Sigmoid colon (tissue), 7 donors: ENCODE measurements at regions of chr14 and their contacts with region 1.

Region 1: DNA sequence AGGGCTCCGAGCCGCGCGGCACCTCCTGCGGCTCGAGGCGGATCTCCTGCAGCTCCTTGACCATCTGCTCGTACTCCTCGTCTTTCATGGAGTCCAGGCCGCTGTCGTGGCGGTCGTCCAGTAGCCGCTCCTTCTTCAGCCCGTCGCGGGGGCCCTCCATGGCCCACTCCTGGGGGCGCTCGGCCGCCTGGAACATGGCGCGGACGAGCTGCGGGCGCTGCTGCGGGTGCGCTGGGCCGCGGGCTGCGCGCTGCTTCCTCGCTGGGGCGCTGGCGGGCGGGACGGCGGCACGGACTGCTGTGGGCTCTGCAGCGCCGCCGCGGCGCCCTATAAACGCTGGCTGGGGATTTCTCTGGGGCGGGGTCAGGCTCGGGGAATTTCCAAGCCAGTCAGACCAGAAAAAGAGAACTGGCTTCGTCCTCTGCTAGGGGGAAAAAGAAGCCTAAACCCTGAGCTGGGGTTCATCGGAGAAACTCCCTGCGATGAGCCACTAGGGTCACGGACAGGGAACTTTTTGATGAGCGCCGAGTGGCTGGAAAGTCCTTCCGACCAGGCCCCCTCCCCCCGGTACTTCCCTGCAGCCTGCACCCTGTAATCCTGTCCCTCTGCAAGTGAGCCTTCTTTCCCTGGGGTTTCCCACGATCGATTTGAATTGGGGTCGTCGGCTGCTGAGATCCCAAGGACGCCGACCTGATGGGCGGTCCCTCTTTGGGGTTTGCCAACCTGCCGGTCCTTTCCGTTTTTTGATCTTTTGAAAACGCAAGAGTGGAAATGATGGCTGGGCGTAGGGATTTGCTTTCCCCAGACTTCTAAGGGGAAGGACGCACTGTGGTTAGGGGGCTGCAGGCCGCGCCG is at the start of gene NFKBIA:
- DNase-seq: peak; percentile 96
- H3K4me3 ChIP-seq: peak within 1 kb of the TSS; percentile 83 to 99 (median 96)
- H3K27ac ChIP-seq: peak within 1 kb of the TSS; percentile 97 to 100 (median 100)
- H3K4me1 ChIP-seq: peaks cover 0 to 56% (median 45%) of the 10 kb centered on the region in 4 donors
- H3K27me3 ChIP-seq: no peaks in the 10 kb centered on the region
- CTCF ChIP-seq: peak in 1 of 4 experiments; percentile 21
- EP300 ChIP-seq: peak in 1 of 4 donors; percentile 15
- POLR2A ChIP-seq: peak; percentile 65 to 70
- total RNA-seq, gene NFKBIA: 258 to 340 (median 289) TPM

Region 2: DNA sequence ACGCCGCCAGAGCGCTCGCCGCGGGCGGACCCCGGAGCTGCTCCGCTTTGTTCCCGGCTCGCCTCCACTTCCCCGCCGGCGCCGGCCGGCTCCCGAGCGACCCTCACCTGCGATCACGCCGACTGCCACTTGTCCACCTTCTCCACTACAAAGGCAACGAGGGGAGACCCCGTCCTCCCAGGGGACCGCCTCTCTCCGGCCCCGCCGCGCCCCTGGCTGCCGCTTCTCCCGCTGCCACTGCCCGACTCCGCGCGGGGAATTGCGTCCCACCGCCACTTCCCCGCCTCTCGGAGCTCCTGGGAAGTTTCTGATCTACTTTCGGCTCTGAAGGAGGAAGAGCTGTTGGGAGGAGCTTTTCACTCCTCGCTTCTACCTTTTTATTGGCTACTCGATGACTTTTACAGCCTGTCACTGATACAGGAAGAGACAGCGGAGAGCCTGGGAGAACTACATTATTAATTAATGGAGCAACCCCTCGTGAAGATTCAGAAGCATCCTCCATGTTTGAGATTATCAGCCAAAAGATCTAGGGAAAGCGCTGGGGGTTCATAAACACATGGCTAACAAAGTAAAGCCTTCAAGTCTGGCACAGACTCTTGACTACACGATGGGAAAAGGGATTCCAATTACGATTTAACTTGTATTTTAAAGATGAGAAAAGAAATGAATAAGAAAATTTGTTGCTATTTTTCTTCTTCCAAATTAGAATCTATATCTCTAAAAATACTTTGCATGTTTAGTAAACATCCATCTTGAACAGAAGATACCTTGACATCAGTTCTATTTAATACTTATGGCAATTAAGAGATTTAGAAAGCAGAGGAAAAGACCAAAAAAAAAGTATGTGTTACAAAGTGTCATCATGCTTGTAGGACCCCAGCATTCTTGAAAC is 529.4 kb before region 1 on chr14 and contains the start of gene BAZ1A:
- intact Hi-C with region 1: loop called (anchors 5 kb)
- DNase-seq: peak; percentile 83
- H3K4me3 ChIP-seq: peak within 1 kb of the TSS; percentile 66 to 98 (median 92)
- H3K27ac ChIP-seq: peak within 1 kb of the TSS; percentile 97 to 99 (median 98)
- H3K4me1 ChIP-seq: peaks cover 0 to 13% (median 5%) of the 10 kb centered on the region in 4 donors
- H3K27me3 ChIP-seq: no peaks in the 10 kb centered on the region
- CTCF ChIP-seq: peak in 2 of 4 experiments; percentile 15 to 25
- EP300 ChIP-seq: no peak
- POLR2A ChIP-seq: peak; percentile 71 to 88
- total RNA-seq, gene BAZ1A: 18.2 to 25.2 (median 21.6) TPM

Region 3: DNA sequence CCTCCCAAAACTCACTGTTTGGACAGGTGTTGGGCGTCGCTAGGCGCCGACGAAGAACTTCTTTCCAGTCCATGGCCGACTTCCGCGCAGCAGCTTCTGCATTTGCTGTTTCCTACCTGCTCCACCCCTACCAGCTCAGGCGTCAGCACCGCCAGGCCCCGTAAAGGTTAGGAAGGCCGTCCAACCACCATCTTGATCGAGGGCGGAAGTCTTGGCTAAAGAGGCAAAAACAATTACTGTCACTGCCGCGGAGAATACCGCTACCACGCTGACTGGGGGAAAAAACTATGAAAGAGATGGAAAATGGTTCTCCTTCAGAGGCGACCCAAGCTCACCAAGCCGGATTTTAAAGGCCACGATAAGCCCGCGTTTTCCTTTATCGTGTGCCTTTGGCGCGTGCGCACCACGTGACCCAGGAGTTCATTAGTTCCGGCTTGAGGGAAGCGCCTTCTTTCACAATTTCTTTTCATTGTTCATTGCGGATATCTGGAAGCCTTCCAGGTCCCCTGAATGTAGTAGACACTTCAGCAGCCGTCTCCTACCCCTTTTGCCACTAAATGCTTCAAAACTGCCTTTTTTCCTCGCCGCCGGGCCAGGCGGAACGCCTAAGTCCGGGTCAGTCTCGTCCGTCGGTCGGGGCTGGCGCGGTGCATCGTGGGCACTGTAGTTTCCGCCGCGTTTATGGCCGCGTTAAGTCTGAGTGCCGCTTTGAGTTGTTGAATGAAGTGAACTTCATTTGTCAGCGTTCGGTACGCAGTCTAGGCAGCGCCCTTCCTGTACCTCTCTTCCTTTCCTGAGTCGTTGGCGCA is 282.6 kb before region 1 on chr14 and contains the starts of genes PPP2R3C and PRORP:
- intact Hi-C with region 1: loop called (anchors 5 kb)
- DNase-seq: peak; percentile 96
- H3K4me3 ChIP-seq: peak within 1 kb of the TSS; percentile 68 to 70 (median 69)
- H3K27ac ChIP-seq: peak within 1 kb of the TSS; percentile 90 to 98 (median 94)
- H3K4me1 ChIP-seq: peaks cover 0 to 41% (median 26%) of the 10 kb centered on the region in 4 donors
- H3K27me3 ChIP-seq: no peaks in the 10 kb centered on the region
- CTCF ChIP-seq: no peak
- EP300 ChIP-seq: no peak
- POLR2A ChIP-seq: peak; percentile 45 to 70
- total RNA-seq, gene PPP2R3C: 25.3 to 44.3 (median 40.5) TPM
- total RNA-seq, gene PRORP: 7.9 to 17.1 (median 13.6) TPM

Region 4: DNA sequence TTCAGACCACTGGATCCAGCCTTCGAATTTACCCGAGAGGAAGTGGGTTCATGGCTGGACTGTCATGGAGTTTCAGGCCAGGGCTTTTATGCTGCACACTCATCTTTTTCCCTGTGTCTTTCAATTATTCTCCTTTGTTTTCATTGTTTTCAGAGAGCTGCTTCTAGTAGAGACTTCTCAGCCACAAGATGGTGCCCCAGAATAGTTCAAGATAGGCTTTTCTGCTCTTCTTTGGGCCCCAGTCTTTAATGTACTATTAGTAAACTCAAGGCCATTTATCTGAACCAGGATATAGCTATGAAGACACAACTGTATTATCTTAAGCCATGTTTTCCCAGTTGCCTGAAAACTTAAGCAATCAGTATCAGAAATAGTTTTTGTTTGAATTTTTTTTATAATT is 142.9 kb before region 1 on chr14:
- intact Hi-C with region 1: loop called (anchors 2 kb)
- DNase-seq: no peak
- H3K4me3 ChIP-seq: no peak overlapping the region
- H3K27ac ChIP-seq: no peak overlapping the region
- H3K4me1 ChIP-seq: no peaks in the 10 kb centered on the region
- H3K27me3 ChIP-seq: no peaks in the 10 kb centered on the region
- CTCF ChIP-seq: peak in 1 of 4 experiments; percentile 30
- EP300 ChIP-seq: no peak
- POLR2A ChIP-seq: no peak

Region 5: GRCh38 chr14:35341446-35342159 is 63.1 kb before region 1 on chr14:
- intact Hi-C with region 1: loop called (anchors 1 kb)
- DNase-seq: peak; percentile 99
- H3K4me3 ChIP-seq: peak overlapping the region in 3 of 4 donors; percentile 26 to 39 (median 39)
- H3K27ac ChIP-seq: peak overlapping the region; percentile 91 to 99 (median 94)
- H3K4me1 ChIP-seq: peaks cover 0 to 66% (median 56%) of the 10 kb centered on the region in 4 donors
- H3K27me3 ChIP-seq: no peaks in the 10 kb centered on the region
- CTCF ChIP-seq: no peak
- EP300 ChIP-seq: peak in 3 of 4 donors; percentile 2 to 76 (median 19)
- POLR2A ChIP-seq: peak in 1 of 2 donors; percentile 65

Region 6: GRCh38 chr14:35365130-35366055 is 39.3 kb before region 1 on chr14:
- intact Hi-C with region 1: no loop called
- DNase-seq: peak; percentile 92
- H3K4me3 ChIP-seq: no peak overlapping the region
- H3K27ac ChIP-seq: peak overlapping the region; percentile 60 to 72 (median 68)
- H3K4me1 ChIP-seq: peaks cover 0 to 42% (median 36%) of the 10 kb centered on the region in 4 donors
- H3K27me3 ChIP-seq: no peaks in the 10 kb centered on the region
- CTCF ChIP-seq: no peak
- EP300 ChIP-seq: peak in 1 of 4 donors; percentile 39
- POLR2A ChIP-seq: no peak

Region 7: DNA sequence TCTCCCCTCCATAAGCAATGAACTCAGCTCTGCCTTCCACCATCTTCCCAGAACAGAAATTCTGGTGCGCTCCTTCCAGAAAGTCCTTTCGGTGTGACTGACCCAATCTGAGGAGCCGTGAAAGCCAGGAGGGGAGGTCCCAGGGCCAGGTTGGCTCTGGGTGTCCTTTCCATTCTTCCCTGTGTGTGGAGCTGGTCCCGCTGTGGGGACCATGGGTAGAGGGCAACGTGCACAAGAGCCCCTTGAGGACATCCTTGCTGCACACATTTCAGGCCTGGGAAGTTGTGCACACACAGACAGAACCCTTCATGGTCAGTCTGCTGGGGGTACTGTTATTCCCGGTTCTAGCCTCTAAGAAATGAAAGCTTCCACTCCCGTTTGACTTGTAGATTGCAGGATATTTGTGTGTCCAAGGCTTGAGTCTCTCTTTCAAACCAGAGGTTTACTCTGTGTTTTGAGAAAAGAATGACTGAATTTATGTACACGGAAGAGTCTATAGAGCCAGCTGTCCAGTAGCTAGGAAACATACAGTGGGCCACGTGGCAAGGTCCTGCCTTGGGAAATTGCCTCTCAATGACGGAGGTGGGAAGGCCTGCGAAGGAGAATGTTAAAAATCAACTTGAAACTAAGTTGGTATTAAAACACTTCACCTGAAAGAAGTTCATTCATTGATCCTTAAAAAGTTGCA is 10.2 kb before region 1 on chr14:
- intact Hi-C with region 1: loop called (anchors 1 kb)
- DNase-seq: no peak
- H3K4me3 ChIP-seq: no peak overlapping the region
- H3K27ac ChIP-seq: peak overlapping the region; percentile 56 to 67 (median 60)
- H3K4me1 ChIP-seq: peaks cover 0 to 28% (median 26%) of the 10 kb centered on the region in 4 donors
- H3K27me3 ChIP-seq: no peaks in the 10 kb centered on the region
- CTCF ChIP-seq: no peak
- EP300 ChIP-seq: no peak
- POLR2A ChIP-seq: no peak

Region 8: GRCh38 chr14:35482994-35483515 is 78.4 kb after region 1 on chr14:
- intact Hi-C with region 1: no loop called
- DNase-seq: no peak
- H3K4me3 ChIP-seq: no peak overlapping the region
- H3K27ac ChIP-seq: no peak overlapping the region
- H3K4me1 ChIP-seq: no peaks in the 10 kb centered on the region
- H3K27me3 ChIP-seq: no peaks in the 10 kb centered on the region
- CTCF ChIP-seq: no peak
- EP300 ChIP-seq: no peak
- POLR2A ChIP-seq: no peak